Gastrocnemius medialis (tissue), 4 donors: ENCODE measurements at regions of chr16 and their contacts with region 1.

Region 1: DNA sequence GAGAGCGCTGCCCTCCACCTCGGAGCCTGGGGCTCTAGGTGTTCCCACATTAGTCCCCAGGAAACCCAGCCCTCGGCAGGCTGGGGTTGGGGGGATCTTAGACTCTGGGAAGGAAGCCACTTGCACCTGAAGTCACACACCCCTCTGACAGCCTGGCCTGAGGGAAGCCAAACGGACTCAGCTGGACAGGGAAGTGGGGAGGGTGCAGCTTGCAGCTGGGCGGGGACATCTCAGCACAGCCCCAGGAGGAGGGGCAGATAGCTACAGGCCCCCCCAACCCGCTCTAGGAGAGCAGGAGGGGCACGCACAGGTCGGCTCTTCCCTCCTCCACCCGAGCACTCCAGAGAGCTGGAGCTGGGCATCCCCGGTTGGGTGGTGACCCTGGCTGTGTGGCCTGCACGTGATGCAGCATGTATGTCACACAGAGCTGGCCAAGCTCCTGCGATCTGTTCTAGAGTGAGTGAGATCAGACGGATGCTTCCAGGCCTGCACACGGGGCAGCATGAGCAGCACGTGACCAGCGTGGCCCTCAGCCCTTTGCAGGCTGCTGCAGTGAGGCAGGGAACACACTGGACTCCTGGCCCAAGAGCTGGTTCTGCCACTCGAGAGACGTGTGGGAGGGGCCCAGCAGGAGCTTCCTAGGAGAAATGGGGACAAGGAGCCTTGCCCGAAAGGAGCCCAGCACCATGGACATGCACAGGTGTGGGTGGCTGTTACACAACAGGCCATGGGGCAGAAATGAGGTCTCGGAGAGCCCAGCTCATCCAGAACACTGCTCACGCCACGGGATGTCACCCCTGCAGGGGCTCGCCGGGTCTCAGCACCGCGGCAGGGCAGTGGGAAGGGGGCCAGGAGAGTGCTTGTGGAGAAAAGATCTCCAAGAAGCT is 15.4 kb downstream of the KIFC3 start:
- DNase-seq: peak; percentile 77 to 88
- ATAC-seq: peak; percentile 54 to 84
- H3K4me3 ChIP-seq: no peak overlapping the region
- H3K27ac ChIP-seq: peak overlapping the region; percentile 60 to 89 (median 74)
- H3K4me1 ChIP-seq: peaks cover 32 to 38% of the 10 kb centered on the region in 2 donors
- H3K27me3 ChIP-seq: no peaks in the 10 kb centered on the region
- CTCF ChIP-seq: no peak
- POLR2A ChIP-seq: peak in 1 of 2 donors; percentile 38

Region 2: DNA sequence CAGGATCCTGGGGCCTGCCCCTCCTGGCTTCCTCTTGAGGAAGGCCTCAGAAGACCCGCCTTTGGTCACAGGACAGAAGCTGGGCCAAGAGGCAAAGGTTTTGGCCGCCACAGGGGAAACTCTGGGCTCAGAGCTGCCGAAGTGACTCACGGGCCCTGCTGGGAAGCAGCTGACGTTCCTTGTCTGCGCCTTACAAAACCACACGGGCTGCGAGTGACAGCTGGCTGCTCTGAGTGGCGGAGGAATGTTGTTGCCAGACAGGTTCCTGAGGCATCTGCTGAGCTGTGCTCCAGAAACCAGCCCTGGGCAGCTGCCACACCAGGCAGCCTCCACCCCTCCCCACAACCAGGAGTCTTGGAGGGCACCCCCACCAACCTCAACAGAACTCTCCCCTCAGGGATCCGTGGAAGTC is 29.5 kb after region 1 on chr16:
- in situ Hi-C with region 1: no loop called
- intact Hi-C with region 1: loop called (anchors 1 kb)
- DNase-seq: peak; percentile 97 to 98
- ATAC-seq: peak; percentile 98
- H3K4me3 ChIP-seq: no peak overlapping the region
- H3K27ac ChIP-seq: peak overlapping the region; percentile 80 to 87 (median 85)
- H3K4me1 ChIP-seq: peaks cover 15 to 17% of the 10 kb centered on the region in 2 donors
- H3K27me3 ChIP-seq: no peaks in the 10 kb centered on the region
- CTCF ChIP-seq: no peak
- POLR2A ChIP-seq: peak in 1 of 2 donors; percentile 19

Region 3: GRCh38 chr16:57826706-57827625 is 40.1 kb after region 1 on chr16:
- in situ Hi-C with region 1: no loop called
- intact Hi-C with region 1: loop called (anchors 2 kb)
- DNase-seq: peak; percentile 43 to 82
- ATAC-seq: peak; percentile 78 to 80
- H3K4me3 ChIP-seq: no peak overlapping the region
- H3K27ac ChIP-seq: peak overlapping the region; percentile 47 to 77 (median 64)
- H3K4me1 ChIP-seq: peaks cover 22 to 25% of the 10 kb centered on the region in 2 donors
- H3K27me3 ChIP-seq: no peaks in the 10 kb centered on the region
- CTCF ChIP-seq: no peak
- POLR2A ChIP-seq: no peak